CD4-positive, alpha-beta T cell (primary cell): ENCODE measurements at regions of chr1 and their contacts with region 1.

Region 1: GRCh38 chr1:35769188-35769758 is 505 bp downstream of the CLSPN start:
- DNase-seq: peak; percentile 60 to 92 (median 75)
- ATAC-seq: peak; percentile 79
- H3K4me3 ChIP-seq: peak overlapping the region; percentile 85
- H3K4me3 Mint-ChIP-seq: peak overlapping the region; percentile 97
- H3K27ac ChIP-seq: peak overlapping the region; percentile 68 to 78
- H3K27ac Mint-ChIP-seq: peak overlapping the region; percentile 72
- H3K4me1 ChIP-seq: peaks cover 13% of the 10 kb centered on the region
- H3K4me1 Mint-ChIP-seq: peaks cover 13% of the 10 kb centered on the region
- H3K27me3 ChIP-seq: no peaks in the 10 kb centered on the region
- H3K27me3 Mint-ChIP-seq: no peaks in the 10 kb centered on the region
- CTCF ChIP-seq: no peak

Region 2: DNA sequence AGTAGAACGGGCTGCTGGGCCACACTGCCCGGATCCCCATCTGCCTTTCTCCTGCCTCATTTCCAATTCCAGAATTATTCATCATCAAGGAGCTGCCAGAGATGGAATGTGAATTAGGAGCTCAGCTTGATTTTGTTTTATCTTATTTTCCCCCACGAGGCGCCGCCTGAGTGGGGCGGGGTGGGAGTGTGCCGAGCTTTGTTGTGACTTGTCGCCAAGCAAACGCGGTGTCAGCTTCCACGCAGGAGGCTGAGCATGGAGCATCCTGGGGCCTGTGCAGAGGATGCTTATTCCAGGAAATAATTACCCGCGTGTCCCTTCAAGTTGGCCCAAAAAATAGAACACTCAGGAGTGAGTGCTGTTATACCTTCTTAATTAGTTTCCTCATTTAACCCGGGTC is 1814.2 kb before region 1 on chr1:
- CTCF ChIA-PET with region 1: no interaction called
- POLR2A ChIA-PET with region 1: no interaction called
- intact Hi-C with region 1: no loop called
- DNase-seq: no peak
- ATAC-seq: no peak
- H3K4me3 ChIP-seq: no peak overlapping the region
- H3K4me3 Mint-ChIP-seq: no peak overlapping the region
- H3K27ac ChIP-seq: no peak overlapping the region
- H3K27ac Mint-ChIP-seq: no peak overlapping the region
- H3K4me1 ChIP-seq: no peaks in the 10 kb centered on the region
- H3K4me1 Mint-ChIP-seq: no peaks in the 10 kb centered on the region
- H3K27me3 ChIP-seq: no peaks in the 10 kb centered on the region
- H3K27me3 Mint-ChIP-seq: no peaks in the 10 kb centered on the region
- CTCF ChIP-seq: no peak

Region 3: DNA sequence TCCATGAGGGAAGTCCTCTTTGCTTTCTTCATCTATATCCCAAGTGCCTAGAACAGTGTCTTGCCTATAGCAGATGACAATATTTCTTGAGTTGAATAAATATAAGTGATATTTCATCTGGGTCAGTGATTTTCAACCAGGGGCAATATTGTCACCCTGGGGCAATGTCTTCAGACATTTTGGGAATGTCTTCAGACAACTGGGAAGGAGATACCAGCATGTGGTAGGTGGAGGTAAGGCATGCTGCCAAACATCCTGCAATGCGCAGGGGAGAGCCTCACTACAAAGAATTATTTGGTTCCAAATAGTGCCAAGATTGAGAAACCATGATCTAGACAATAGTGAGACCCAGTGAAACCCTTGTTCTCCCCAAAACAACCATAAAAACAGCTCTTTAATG is 1537.8 kb before region 1 on chr1:
- CTCF ChIA-PET with region 1: no interaction called
- POLR2A ChIA-PET with region 1: no interaction called
- intact Hi-C with region 1: no loop called
- DNase-seq: no peak
- ATAC-seq: no peak
- H3K4me3 ChIP-seq: no peak overlapping the region
- H3K4me3 Mint-ChIP-seq: no peak overlapping the region
- H3K27ac ChIP-seq: no peak overlapping the region
- H3K27ac Mint-ChIP-seq: no peak overlapping the region
- H3K4me1 ChIP-seq: no peaks in the 10 kb centered on the region
- H3K4me1 Mint-ChIP-seq: no peaks in the 10 kb centered on the region
- H3K27me3 ChIP-seq: no peaks in the 10 kb centered on the region
- H3K27me3 Mint-ChIP-seq: peaks cover 45% of the 10 kb centered on the region
- CTCF ChIP-seq: no peak

Region 4: DNA sequence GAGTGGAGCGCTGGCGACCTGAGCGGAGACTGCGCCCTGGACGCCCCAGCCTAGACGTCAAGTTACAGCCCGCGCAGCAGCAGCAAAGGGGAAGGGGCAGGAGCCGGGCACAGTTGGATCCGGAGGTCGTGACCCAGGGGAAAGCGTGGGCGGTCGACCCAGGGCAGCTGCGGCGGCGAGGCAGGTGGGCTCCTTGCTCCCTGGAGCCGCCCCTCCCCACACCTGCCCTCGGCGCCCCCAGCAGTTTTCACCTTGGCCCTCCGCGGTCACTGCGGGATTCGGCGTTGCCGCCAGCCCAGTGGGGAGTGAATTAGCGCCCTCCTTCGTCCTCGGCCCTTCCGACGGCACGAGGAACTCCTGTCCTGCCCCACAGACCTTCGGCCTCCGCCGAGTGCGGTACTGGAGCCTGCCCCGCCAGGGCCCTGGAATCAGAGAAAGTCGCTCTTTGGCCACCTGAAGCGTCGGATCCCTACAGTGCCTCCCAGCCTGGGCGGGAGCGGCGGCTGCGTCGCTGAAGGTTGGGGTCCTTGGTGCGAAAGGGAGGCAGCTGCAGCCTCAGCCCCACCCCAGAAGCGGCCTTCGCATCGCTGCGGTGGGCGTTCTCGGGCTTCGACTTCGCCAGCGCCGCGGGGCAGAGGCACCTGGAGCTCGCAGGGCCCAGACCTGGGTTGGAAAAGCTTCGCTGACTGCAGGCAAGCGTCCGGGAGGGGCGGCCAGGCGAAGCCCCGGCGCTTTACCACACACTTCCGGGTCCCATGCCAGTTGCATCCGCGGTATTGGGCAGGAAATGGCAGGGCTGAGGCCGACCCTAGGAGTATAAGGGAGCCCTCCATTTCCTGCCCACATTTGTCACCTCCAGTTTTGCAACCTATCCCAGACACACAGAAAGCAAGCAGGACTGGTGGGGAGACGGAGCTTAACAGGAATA is 191.9 kb before region 1 on chr1:
- CTCF ChIA-PET with region 1: no interaction called
- POLR2A ChIA-PET with region 1: interaction called, 13 read pairs
- intact Hi-C with region 1: no loop called
- DNase-seq: peak; percentile 35 to 88 (median 59)
- ATAC-seq: peak; percentile 80
- H3K4me3 ChIP-seq: peak overlapping the region; percentile 81
- H3K4me3 Mint-ChIP-seq: peak overlapping the region; percentile 90
- H3K27ac ChIP-seq: no peak overlapping the region
- H3K27ac Mint-ChIP-seq: peak overlapping the region; percentile 12
- H3K4me1 ChIP-seq: peaks cover 31% of the 10 kb centered on the region
- H3K4me1 Mint-ChIP-seq: peaks cover 26% of the 10 kb centered on the region
- H3K27me3 ChIP-seq: peaks cover 0 to 2% of the 10 kb centered on the region in 2 experiments
- H3K27me3 Mint-ChIP-seq: peaks cover 5% of the 10 kb centered on the region
- CTCF ChIP-seq: no peak

Region 5: GRCh38 chr1:35641233-35641866 is 127.9 kb before region 1 on chr1 and contains the start of gene PSMB2:
- CTCF ChIA-PET with region 1: no interaction called
- POLR2A ChIA-PET with region 1: no interaction called
- intact Hi-C with region 1: loop called in 1 of 2 experiments (anchors 5 kb)
- DNase-seq: peak; percentile 92 to 98 (median 96)
- ATAC-seq: peak; percentile 89
- H3K4me3 ChIP-seq: peak within 1 kb of the TSS; percentile 83
- H3K4me3 Mint-ChIP-seq: peak within 1 kb of the TSS; percentile 99
- H3K27ac ChIP-seq: peak within 1 kb of the TSS; percentile 63 to 73
- H3K27ac Mint-ChIP-seq: peak within 1 kb of the TSS; percentile 98
- H3K4me1 ChIP-seq: peaks cover 15% of the 10 kb centered on the region
- H3K4me1 Mint-ChIP-seq: peaks cover 47% of the 10 kb centered on the region
- H3K27me3 ChIP-seq: peaks cover 0 to 16% of the 10 kb centered on the region in 2 experiments
- H3K27me3 Mint-ChIP-seq: peaks cover 35% of the 10 kb centered on the region
- CTCF ChIP-seq: no peak
- total RNA-seq, gene PSMB2: 34.0 to 35.3 TPM

Region 6: GRCh38 chr1:35726450-35727433 is 42.5 kb before region 1 on chr1:
- CTCF ChIA-PET with region 1: interaction called, 9 read pairs
- POLR2A ChIA-PET with region 1: no interaction called
- intact Hi-C with region 1: loop called (anchors 1 to 2 kb)
- DNase-seq: peak; percentile 20 to 81 (median 37)
- ATAC-seq: peak; percentile 92
- H3K4me3 ChIP-seq: no peak overlapping the region
- H3K4me3 Mint-ChIP-seq: no peak overlapping the region
- H3K27ac ChIP-seq: no peak overlapping the region
- H3K27ac Mint-ChIP-seq: no peak overlapping the region
- H3K4me1 ChIP-seq: peaks cover 7% of the 10 kb centered on the region
- H3K4me1 Mint-ChIP-seq: peaks cover 7% of the 10 kb centered on the region
- H3K27me3 ChIP-seq: no peaks in the 10 kb centered on the region
- H3K27me3 Mint-ChIP-seq: no peaks in the 10 kb centered on the region
- CTCF ChIP-seq: peak; percentile 83